ENCODE measurements at regions of chr6 and their contacts with region 1.

Region 1: GRCh38 chr6:32868257-32868788 is 14.3 kb downstream of the PSMB9 start:
- DNase-seq: peak; percentile 75
- H3K4me3 Mint-ChIP-seq: no peak overlapping the region
- H3K27ac Mint-ChIP-seq: no peak overlapping the region
- H3K4me1 Mint-ChIP-seq: peaks cover 36% of the 10 kb centered on the region
- H3K27me3 Mint-ChIP-seq: peaks cover 1% of the 10 kb centered on the region

Region 2: DNA sequence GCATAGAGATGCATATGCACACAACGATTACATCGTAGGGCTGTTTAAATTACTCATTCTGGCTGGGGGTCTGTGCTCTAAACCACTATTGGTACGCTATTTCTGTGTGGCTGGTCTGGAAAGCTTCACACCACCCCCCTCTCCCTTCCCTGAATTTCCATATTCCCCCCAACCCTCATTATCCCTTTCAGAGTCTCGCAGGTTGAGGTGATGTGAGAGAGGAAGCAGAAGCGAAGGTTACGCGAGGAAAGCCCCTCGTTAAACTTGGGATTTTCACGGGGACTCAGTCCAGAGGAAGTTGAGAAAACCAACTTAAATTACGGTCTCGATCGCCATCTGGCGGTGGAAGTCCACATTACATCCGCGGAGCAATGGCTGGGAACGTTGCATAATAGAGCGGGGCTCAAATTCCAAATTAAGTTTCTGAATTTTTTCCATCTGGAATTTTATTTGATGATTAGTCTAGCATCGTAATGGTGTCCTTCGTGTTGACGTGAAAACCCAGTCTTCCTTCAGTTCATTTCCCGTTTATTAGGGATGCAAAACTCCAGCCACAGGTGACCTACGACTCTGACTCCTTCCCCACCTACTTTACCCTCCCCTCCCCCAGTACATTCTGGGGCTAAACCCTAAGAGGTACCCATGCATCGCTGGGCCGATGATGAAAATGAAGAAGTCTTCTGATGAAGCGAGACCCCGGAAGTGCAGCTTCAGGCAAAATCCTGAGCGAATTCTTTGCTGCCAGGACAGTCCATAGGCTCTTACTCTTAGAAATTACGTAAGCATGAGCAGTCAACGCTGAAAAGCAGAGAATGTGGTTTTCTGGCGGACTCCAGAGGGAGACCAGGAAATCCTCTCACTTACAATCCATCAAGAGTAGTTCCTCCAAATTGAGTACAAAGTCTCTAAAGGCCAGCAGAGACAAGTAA is 71.2 kb before region 1 on chr6:
- intact Hi-C with region 1: loop called (anchors 1 kb)
- DNase-seq: peak; percentile 65
- H3K4me3 Mint-ChIP-seq: peak overlapping the region; percentile 46
- H3K27ac Mint-ChIP-seq: no peak overlapping the region
- H3K4me1 Mint-ChIP-seq: peaks cover 31% of the 10 kb centered on the region
- H3K27me3 Mint-ChIP-seq: peaks cover 53% of the 10 kb centered on the region

Region 3: DNA sequence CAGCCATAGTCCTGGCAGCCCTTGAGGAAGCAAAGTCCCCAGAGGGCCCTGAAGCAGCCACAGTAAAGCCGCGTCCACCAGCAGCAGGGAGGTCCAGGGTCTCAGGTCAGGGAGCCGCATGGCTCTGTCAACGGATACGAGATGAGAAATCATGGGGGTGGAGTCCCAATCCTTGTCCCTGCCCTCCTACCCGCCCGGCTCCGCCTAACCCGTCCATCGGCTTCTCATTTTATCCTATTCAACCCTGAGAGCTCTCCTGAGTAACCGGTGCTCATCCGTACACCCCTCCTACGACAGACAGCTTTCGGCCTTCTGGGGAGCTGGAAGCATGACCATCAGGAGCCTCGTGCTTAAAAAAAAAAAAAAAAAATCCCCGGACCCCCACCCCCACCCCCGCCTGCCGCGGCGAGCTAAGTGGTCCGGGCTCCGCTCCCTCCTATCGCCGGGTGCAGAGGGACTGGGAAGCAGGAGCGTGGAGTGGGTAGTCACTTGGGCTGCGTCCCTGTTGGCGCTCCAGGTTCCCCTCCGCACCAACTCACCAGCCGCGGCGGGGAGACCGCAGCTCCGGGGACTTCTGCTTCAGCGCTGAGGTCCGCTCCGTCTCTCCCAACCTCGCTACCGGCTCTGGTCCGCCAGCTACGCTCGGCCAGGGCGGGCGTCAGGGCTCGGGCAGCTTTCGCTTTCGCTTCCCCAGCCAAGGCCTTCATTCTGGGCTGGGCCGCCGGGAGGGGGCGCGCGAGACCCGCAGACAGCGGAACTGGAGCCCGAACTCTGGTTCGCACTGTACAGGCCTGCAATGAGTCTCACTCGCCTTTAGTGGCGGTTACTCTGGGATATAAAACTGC is 30.0 kb before region 1 on chr6 and contains the start of gene TAP2:
- intact Hi-C with region 1: loop called (anchors 1 kb)
- DNase-seq: peak; percentile 97
- H3K4me3 Mint-ChIP-seq: peak within 1 kb of the TSS; percentile 79
- H3K27ac Mint-ChIP-seq: peak within 1 kb of the TSS; percentile 89
- H3K4me1 Mint-ChIP-seq: peaks cover 87% of the 10 kb centered on the region
- H3K27me3 Mint-ChIP-seq: no peaks in the 10 kb centered on the region
- total RNA-seq, gene TAP2: 160 and 167 TPM in 2 replicates

Region 4: GRCh38 chr6:32843979-32844838 is 24.1 kb before region 1 on chr6 and contains the start of gene PSMB8:
- intact Hi-C with region 1: loop called (anchors 1 kb)
- DNase-seq: peak; percentile 96
- H3K4me3 Mint-ChIP-seq: peak within 1 kb of the TSS; percentile 93
- H3K27ac Mint-ChIP-seq: peak within 1 kb of the TSS; percentile 98
- H3K4me1 Mint-ChIP-seq: peaks cover 82% of the 10 kb centered on the region
- H3K27me3 Mint-ChIP-seq: no peaks in the 10 kb centered on the region
- total RNA-seq, gene PSMB8: 353 and 358 TPM in 2 replicates